ENCODE measurements at regions of chr3 and their contacts with region 1.

Region 1: DNA sequence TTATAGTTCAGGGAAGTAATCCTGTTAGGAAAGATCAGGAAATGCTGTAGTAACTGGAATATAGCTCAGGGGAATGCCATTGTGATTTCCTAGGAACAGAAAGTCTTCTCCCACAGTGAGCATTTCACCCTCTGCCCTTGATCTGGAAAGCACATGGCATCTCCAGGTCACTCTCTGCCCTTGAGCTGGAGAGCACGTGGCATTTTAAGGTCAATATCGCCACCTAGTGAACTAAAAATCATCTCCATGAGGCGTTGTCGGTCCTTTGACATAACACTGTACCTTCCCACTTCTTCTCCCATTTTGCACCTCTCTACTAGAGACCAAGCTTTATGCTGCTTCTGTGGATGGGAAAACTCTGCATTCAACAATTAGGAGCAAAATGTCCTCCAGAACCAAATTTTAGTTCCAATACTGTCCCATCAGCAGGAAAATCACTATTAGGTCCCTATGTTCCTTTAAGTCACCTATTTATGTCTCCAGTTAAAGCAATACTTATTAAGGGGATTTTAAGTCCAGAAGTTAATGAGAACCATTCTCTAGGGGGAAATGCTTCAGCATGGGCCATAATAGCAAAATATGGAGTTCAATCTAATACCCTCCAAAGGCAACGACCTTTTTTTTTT is 54.7 kb upstream of the GK5 start:
- DNase-seq: peak; percentile 55
- H3K4me3 Mint-ChIP-seq: no peak overlapping the region
- H3K27ac Mint-ChIP-seq: no peak overlapping the region
- H3K4me1 Mint-ChIP-seq: peaks cover 15% of the 10 kb centered on the region
- H3K27me3 Mint-ChIP-seq: peaks cover 4% of the 10 kb centered on the region

Region 2: DNA sequence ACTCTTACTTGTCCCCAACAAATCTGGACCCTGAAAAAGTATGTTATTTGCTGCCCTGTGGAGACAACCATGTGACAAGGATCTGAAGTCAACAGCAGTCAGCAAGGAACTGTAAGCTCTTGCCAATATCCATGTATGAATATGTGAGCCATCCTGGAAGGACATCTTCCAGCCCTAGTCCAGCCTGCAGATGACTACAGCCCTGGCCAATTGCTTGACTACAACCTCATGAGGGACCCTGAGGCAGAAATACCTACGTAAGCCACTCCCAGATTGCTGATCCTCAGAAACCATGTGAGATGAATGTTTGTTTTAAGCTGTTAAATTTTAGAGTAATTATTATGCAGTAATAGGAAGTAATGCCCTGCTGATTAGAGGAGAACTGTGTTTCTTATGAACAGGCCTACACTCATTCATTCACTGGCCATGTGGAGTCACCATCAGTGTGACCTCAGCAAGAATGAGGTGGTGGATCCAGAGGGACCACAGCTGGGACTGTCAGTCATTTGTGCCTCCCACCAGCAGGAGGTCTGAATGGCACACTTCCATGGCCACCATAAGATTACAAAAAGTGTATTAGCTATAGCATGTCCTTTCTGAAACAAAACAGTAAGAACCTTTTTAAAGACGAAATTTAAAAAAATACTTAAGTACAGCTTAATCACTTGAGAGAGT is 223.3 kb before region 1 on chr3:
- CTCF ChIA-PET with region 1: no interaction called
- DNase-seq: no peak
- H3K4me3 Mint-ChIP-seq: no peak overlapping the region
- H3K27ac Mint-ChIP-seq: no peak overlapping the region
- H3K4me1 Mint-ChIP-seq: peaks cover 6% of the 10 kb centered on the region
- H3K27me3 Mint-ChIP-seq: no peaks in the 10 kb centered on the region

Region 3: DNA sequence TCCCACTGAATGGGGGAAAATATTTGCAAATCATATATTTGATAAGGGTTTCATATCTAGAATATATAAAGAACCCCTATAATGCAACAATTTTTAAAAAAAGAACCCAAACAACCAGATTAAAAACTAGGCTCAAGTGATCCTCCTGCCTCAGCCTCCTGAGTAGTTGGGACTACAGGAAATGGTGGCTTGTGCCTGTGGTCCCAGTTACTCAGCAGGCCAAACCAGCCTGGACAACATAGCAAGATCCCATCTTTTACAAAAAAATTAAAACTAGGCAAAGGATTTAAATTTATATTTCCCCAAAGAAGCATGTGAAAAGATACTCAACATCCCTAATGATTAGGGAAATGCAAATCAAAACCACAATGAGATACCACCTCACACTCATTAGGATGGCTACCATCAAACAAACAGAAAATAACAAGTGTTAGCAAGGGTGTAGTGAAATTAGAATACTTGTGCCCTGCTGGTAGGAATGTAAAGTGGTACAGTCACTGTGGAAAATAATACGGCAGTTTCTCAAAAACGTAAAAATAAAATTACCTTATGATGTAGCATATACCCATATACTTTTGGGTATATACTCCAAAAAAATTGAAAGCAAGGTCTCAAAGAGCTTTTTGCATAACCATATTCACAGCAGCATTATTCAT is 150.4 kb before region 1 on chr3:
- CTCF ChIA-PET with region 1: interaction called, 40 read pairs
- DNase-seq: no peak
- H3K4me3 Mint-ChIP-seq: no peak overlapping the region
- H3K27ac Mint-ChIP-seq: no peak overlapping the region
- H3K4me1 Mint-ChIP-seq: no peaks in the 10 kb centered on the region
- H3K27me3 Mint-ChIP-seq: no peaks in the 10 kb centered on the region

Region 4: DNA sequence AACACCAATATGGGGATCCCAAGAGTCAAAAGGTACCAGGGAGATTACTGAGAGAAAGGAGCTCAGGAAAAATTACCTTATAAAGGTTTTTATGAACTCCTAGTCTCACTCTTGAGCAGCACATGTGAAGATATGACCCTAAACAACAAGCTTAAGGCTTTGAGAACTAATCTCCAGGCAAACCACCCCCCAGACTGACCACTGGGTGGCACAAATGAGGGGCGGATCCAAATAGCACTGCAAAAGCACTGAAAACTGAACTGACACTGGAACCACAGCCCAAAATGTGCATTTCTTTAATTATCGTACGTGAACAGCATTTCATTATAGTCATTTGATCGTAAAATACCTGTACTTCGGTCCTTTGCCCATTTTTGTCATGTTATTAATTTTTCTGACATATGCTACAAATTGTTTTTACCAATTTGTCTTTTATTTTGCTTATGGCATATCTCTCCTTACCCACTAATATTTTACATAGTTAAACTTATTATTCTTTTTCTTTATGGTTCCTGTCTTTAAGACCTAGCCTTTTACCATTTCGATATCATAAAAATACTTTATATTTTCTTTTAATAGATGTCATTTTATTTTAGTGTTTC is 99.2 kb before region 1 on chr3:
- CTCF ChIA-PET with region 1: interaction called, 23 read pairs
- DNase-seq: peak; percentile 43
- H3K4me3 Mint-ChIP-seq: no peak overlapping the region
- H3K27ac Mint-ChIP-seq: no peak overlapping the region
- H3K4me1 Mint-ChIP-seq: no peaks in the 10 kb centered on the region
- H3K27me3 Mint-ChIP-seq: no peaks in the 10 kb centered on the region

Region 5: DNA sequence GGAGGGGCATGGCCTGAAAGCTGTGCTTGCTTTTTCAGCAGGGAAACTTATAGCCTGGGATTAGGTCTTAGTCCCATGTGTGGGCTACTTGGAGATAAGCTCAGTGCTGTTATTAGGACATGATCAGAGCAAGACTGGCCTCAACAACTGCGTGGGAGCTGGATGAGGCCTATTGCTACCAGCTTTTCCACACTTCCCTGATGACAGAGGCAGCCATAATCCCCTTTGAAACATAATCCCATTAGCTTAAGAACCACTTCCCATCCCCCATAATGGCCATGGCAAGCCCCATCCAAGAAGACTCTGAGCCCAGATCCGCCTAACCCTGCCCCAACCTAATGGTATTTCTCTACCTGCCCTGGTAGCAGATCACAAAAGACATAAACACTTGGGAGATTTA is 28.1 kb before region 1 on chr3:
- CTCF ChIA-PET with region 1: no interaction called
- DNase-seq: no peak
- H3K4me3 Mint-ChIP-seq: no peak overlapping the region
- H3K27ac Mint-ChIP-seq: no peak overlapping the region
- H3K4me1 Mint-ChIP-seq: no peaks in the 10 kb centered on the region
- H3K27me3 Mint-ChIP-seq: peaks cover 42% of the 10 kb centered on the region

Region 6: DNA sequence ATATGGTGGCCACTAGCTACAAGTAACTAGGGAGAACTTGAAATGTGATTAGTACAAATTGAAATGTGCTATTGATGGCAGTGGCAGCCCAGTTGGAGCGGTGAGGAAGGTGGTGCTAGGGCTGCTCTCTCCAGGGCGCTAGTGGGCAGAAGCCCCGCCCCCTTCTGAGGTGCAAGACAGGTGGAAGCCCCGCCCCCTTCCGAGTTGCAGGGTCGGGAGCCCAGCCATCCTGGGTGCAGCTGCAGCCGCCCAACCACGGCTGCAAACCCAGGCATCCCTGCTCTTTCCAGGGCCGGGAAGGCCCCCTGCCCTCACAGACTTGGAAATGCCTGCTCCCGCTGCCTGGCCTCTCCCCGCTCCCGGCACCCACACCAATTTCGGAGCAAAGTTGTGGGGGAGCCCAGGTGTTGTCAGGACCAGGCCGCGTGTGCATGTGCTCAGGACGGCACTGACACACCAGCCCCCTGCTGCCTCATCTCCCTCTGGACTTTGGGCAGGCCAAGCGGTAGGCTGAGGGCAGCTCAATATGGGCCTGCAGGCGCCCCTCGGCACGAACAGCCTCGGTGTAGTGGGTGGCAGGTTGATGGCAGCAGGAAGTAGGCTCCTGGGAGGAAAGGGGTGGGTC is 288.4 kb after region 1 on chr3:
- CTCF ChIA-PET with region 1: no interaction called
- DNase-seq: no peak
- H3K4me3 Mint-ChIP-seq: no peak overlapping the region
- H3K27ac Mint-ChIP-seq: no peak overlapping the region
- H3K4me1 Mint-ChIP-seq: peaks cover 2% of the 10 kb centered on the region
- H3K27me3 Mint-ChIP-seq: no peaks in the 10 kb centered on the region

Region 7: GRCh38 chr3:142656575-142656974 is 376.5 kb after region 1 on chr3:
- CTCF ChIA-PET with region 1: no interaction called
- DNase-seq: no peak
- H3K4me3 Mint-ChIP-seq: no peak overlapping the region
- H3K27ac Mint-ChIP-seq: no peak overlapping the region
- H3K4me1 Mint-ChIP-seq: no peaks in the 10 kb centered on the region
- H3K27me3 Mint-ChIP-seq: no peaks in the 10 kb centered on the region